Ovary (tissue), 10 donors: ENCODE measurements at regions of chr1 and their contacts with region 1.

Region 1: DNA sequence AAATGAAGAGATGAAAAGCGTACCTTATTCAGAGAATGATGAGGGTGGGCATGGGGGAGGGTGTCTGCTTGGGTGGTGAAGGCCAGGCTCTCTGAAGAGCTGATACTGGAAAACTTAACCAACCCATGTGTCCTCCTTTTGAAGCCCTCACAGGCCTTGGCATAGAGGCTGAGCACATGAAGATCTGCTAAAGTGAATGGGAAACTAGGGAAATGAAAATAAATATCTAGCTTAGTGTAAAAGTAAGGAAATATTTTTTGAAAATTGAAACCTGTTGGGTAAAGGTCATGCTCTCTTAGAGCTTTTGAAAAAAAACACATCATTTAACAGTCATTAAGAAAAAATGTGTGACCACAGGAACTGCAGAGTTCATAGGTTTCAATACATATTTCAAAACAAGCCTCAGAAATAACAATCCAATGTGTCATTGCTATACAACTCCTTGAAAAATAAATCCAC is 40.5 kb upstream of the RALGPS2 start:
- DNase-seq: no peak
- H3K4me3 ChIP-seq: no peak overlapping the region
- H3K27ac ChIP-seq: no peak overlapping the region
- H3K4me1 ChIP-seq: peaks cover 7% of the 10 kb centered on the region
- H3K27me3 ChIP-seq: no peaks in the 10 kb centered on the region
- CTCF ChIP-seq: no peak
- EP300 ChIP-seq: no peak
- POLR2A ChIP-seq: no peak

Region 2: DNA sequence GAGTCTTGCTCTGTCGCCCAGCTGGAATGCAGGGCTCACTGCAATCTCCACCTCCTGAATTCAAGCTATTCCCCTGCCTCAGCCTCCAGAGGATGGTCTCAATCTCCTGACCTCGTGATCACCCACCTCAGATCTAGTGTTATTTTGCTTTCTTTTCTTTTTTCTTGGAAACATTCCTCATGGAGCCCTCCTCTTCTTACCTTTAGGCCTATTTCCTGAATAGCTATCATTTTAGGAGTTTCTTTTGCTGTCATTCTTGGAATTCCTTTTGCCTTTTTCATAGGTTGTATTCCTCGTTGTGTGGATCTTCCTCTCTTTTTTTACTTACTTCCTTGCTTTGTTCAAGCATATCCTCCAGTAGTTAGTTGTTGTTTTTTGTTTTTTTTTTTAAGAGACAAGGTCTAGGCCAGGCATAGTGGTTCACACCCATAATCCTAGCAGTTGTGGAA is 416.9 kb before region 1 on chr1:
- intact Hi-C with region 1: no loop called
- DNase-seq: no peak
- H3K4me3 ChIP-seq: no peak overlapping the region
- H3K27ac ChIP-seq: no peak overlapping the region
- H3K4me1 ChIP-seq: no peaks in the 10 kb centered on the region
- H3K27me3 ChIP-seq: no peaks in the 10 kb centered on the region
- CTCF ChIP-seq: no peak
- EP300 ChIP-seq: no peak
- POLR2A ChIP-seq: no peak

Region 3: GRCh38 chr1:179251675-179252074 is 567.1 kb after region 1 on chr1:
- intact Hi-C with region 1: no loop called
- DNase-seq: no peak
- H3K4me3 ChIP-seq: no peak overlapping the region
- H3K27ac ChIP-seq: no peak overlapping the region
- H3K4me1 ChIP-seq: no peaks in the 10 kb centered on the region
- H3K27me3 ChIP-seq: no peaks in the 10 kb centered on the region
- CTCF ChIP-seq: no peak
- EP300 ChIP-seq: no peak
- POLR2A ChIP-seq: no peak

Region 4: DNA sequence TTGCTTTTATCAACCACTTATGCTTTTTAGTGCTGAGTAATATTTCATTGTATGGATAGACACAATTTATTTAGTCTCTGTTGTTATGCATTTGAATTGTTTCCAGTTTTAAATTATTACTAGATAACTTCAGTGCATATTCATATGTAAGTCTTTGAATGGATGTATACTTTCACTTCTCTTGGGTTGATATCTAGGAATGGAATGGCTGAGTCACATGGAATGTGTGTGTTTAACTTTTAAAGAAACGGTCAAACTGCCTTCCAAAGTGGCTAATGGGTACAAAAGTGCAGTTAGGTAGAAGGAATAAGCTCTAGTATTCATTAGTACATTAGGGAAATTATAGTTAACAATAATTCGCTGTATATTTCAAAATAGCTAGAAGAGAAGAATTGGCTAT is 808.8 kb after region 1 on chr1:
- intact Hi-C with region 1: loop called in 1 of 4 experiments (anchors 10 kb)
- DNase-seq: no peak
- H3K4me3 ChIP-seq: no peak overlapping the region
- H3K27ac ChIP-seq: no peak overlapping the region
- H3K4me1 ChIP-seq: no peaks in the 10 kb centered on the region
- H3K27me3 ChIP-seq: no peaks in the 10 kb centered on the region
- CTCF ChIP-seq: no peak
- EP300 ChIP-seq: no peak
- POLR2A ChIP-seq: no peak